ENCODE measurements at regions of chr10 and their contacts with region 1.

Region 1: DNA sequence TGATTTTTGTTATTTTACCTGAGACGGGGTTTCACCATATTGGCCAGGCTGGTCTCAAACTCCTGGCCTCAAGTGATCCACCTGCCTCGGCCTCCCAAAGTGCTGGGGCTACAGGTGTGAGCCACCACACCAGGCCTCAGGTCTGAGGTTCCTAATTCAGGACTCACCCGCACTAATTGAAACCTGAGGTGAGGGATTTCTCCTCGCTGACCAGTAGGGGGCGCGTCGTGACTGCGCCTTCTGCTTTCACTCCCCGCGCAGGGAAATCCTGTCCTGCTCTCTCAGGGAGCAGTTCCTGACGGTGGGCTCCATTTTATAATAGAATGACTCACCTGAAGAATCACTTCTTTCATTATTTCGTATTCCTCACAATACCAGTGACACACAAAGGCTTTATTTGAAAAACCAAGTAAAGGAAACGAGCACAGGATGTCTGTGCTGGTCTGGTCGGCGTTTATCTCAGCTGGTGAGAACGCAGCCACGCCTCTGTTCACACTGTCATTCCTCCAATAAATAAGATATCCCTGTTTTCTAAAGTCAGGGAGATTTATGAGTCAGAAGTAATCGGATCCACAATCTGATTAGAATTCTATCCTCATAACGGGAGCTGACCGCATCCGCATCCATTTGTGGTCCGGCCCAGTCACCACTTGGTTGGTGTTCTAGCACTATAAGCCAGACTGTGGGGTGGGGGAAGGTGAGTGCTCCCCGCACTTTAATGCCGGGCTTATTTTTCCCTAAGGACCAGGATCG is 35.4 kb downstream of the BAG3 start:
- DNase-seq: peak; percentile 75 to 89 (median 83)
- ATAC-seq: peak; percentile 70 to 91 (median 88)
- H3K4me3 ChIP-seq: peak overlapping the region in 9 of 12 donors; percentile 24 to 57 (median 40)
- H3K27ac ChIP-seq: peak overlapping the region in 10 of 12 donors; percentile 9 to 73 (median 36)
- H3K4me1 ChIP-seq: peaks cover 0 to 26% (median 12%) of the 10 kb centered on the region in 12 donors
- H3K27me3 ChIP-seq: no peaks in the 10 kb centered on the region
- CTCF ChIP-seq: peak; percentile 90 to 97 (median 94)
- POLR2A ChIP-seq: no peak

Region 2: GRCh38 chr10:119496273-119496672 is 190.3 kb before region 1 on chr10:
- intact Hi-C with region 1: no loop called
- DNase-seq: no peak
- ATAC-seq: no peak
- H3K4me3 ChIP-seq: no peak overlapping the region
- H3K27ac ChIP-seq: no peak overlapping the region
- H3K4me1 ChIP-seq: peaks cover 0 to 13% (median 0%) of the 10 kb centered on the region in 12 donors
- H3K27me3 ChIP-seq: no peaks in the 10 kb centered on the region
- CTCF ChIP-seq: no peak
- POLR2A ChIP-seq: no peak

Region 3: DNA sequence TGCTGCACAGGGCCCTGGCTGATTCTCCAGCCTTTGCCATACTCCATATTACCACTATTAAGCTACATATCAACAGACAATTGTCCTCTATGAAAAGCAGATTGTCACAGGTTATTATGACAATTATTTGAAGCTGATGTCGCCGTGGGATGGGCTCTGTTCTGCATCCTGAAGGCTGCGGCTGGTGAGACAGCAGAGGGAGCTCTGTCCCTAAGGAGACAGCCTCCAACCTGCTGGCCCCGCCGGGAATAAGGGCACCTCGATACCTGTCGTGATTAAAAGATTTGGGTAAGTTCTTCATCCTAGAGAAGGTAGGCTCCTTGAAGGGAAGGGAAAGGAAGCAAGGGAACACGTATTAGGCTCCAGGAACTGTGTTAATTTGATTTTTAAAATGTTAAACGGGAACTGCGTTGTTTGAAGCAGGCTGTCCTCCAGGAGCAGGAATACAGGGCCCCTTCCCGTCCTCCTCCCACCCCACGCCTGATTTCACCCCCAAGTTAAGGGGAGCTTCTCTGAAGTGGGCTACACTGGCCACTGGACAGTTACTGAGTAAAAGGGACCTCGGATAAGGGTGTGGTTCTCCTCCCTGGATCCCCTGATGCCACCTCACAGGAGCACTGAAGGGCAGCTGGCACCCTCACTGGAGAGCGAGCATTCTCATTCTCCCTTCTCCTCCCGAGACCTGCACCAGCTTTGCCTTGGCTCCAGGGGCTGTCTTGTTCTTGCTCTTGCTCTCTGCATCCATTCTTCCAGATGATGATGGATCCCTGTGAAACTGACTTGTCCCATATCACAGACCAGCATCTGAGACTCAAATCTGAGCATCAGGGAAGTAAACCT is 78.1 kb before region 1 on chr10:
- intact Hi-C with region 1: loop called in 1 of 10 experiments (anchors 10 kb)
- DNase-seq: peak; percentile 27 to 74 (median 46)
- ATAC-seq: peak; percentile 77 to 94 (median 86)
- H3K4me3 ChIP-seq: peak overlapping the region in 2 of 12 donors; percentile 14 to 16
- H3K27ac ChIP-seq: no peak overlapping the region
- H3K4me1 ChIP-seq: peaks cover 0 to 3% (median 0%) of the 10 kb centered on the region in 12 donors
- H3K27me3 ChIP-seq: no peaks in the 10 kb centered on the region
- CTCF ChIP-seq: peak; percentile 37 to 76 (median 63)
- POLR2A ChIP-seq: no peak

Region 4: GRCh38 chr10:119725828-119726675 is 39.4 kb after region 1 on chr10 and contains the start of gene INPP5F:
- intact Hi-C with region 1: loop called in 6 of 10 experiments (anchors 1 to 5 kb)
- DNase-seq: peak; percentile 99 to 100 (median 100)
- ATAC-seq: peak; percentile 99 to 100 (median 99)
- H3K4me3 ChIP-seq: peak within 1 kb of the TSS; percentile 67 to 98 (median 82)
- H3K27ac ChIP-seq: peak within 1 kb of the TSS; percentile 51 to 99 (median 95)
- H3K4me1 ChIP-seq: peaks cover 0 to 39% (median 23%) of the 10 kb centered on the region in 12 donors
- H3K27me3 ChIP-seq: no peaks in the 10 kb centered on the region
- CTCF ChIP-seq: peak in 10 of 12 donors; percentile 26 to 58 (median 35)
- POLR2A ChIP-seq: peak in 1 of 2 donors; percentile 57
- total RNA-seq, gene INPP5F: 3.9 to 9.9 (median 6.6) TPM

Region 5: GRCh38 chr10:119859420-119860258 is 173.0 kb after region 1 on chr10:
- intact Hi-C with region 1: loop called (anchors 2 to 10 kb)
- DNase-seq: no peak
- ATAC-seq: peak in 1 of 4 donors; percentile 45
- H3K4me3 ChIP-seq: no peak overlapping the region
- H3K27ac ChIP-seq: no peak overlapping the region
- H3K4me1 ChIP-seq: peaks cover 0 to 9% (median 0%) of the 10 kb centered on the region in 12 donors
- H3K27me3 ChIP-seq: no peaks in the 10 kb centered on the region
- CTCF ChIP-seq: peak; percentile 55 to 75 (median 66)
- POLR2A ChIP-seq: no peak

Region 6: DNA sequence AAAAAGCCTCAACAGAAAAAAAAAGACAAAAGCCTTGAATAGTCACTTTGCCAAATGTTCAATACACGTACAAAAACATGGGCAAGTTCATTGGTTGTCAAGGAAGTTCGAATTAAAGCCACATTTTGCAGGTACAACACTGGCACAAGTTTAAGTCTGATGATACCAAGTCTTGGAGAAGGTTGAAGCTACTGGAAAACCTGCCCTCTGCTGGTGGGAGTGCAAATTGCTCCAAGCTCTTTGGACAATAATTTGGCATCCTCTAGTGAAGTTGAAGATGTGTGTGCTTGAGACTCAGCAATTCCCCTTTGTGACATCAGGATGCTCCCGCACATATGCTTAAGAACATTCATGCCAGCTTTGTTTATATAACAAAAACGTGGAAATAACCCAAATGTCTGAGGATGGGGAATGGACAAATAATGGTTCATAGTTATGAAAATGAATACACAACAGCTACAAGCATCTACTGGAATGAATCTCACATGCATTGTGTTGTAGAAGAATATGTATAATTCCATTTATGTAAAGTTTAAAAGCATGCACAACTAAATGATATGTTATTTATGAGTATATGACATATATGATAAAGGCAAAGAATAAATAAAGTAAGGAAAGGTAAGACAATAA is 650.4 kb after region 1 on chr10:
- intact Hi-C with region 1: loop called in 1 of 10 experiments (anchors 10 kb)
- DNase-seq: no peak
- ATAC-seq: no peak
- H3K4me3 ChIP-seq: no peak overlapping the region
- H3K27ac ChIP-seq: no peak overlapping the region
- H3K4me1 ChIP-seq: no peaks in the 10 kb centered on the region
- H3K27me3 ChIP-seq: peaks cover 0 to 11% (median 0%) of the 10 kb centered on the region in 9 donors
- CTCF ChIP-seq: peak; percentile 38 to 80 (median 57)
- POLR2A ChIP-seq: no peak